ENCODE measurements at regions of chr4 and their contacts with region 1.

Region 1: GRCh38 chr4:147518846-147519767 is 38.2 kb downstream of the EDNRA start:
- DNase-seq: peak; percentile 68
- H3K4me3 ChIP-seq: no peak overlapping the region
- CTCF ChIP-seq: peak; percentile 96

Region 2: GRCh38 chr4:147480891-147481576 is 38.1 kb before region 1 on chr4 and contains the start of gene EDNRA:
- in situ Hi-C with region 1: loop called (anchors 5 kb)
- DNase-seq: no peak
- H3K4me3 ChIP-seq: peak within 1 kb of the TSS; percentile 61
- CTCF ChIP-seq: no peak

Region 3: GRCh38 chr4:147566762-147567161 is 47.7 kb after region 1 on chr4:
- in situ Hi-C with region 1: no loop called
- DNase-seq: no peak
- H3K4me3 ChIP-seq: no peak overlapping the region
- CTCF ChIP-seq: no peak

Region 4: GRCh38 chr4:147586637-147587036 is 67.5 kb after region 1 on chr4:
- in situ Hi-C with region 1: no loop called
- DNase-seq: no peak
- H3K4me3 ChIP-seq: no peak overlapping the region
- CTCF ChIP-seq: no peak

Region 5: DNA sequence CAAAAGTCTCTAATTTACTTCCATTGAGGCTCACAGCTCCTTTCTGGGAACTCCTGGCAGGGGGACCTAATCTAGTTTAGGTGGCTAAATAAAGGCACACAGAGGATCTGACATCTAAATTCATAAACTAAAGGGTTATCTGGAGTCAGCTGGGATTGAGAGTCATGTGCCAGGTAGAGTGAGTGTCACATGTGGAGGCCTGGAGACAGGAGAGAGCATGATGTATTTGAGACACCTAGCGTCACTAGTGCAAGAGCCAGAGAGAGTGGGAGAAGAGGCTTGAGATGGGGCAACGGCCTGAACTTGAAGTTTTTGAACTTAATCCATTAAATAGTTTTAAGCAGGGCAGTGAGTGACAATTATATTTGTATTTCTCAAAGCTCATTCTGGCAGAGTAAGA is 365.4 kb after region 1 on chr4:
- in situ Hi-C with region 1: no loop called
- DNase-seq: no peak
- H3K4me3 ChIP-seq: no peak overlapping the region
- CTCF ChIP-seq: no peak

Measured in astrocyte of the cerebellum (primary cell).